Breast epithelium (tissue), 4 donors: ENCODE measurements at regions of chr2 and their contacts with region 1.

Region 1: DNA sequence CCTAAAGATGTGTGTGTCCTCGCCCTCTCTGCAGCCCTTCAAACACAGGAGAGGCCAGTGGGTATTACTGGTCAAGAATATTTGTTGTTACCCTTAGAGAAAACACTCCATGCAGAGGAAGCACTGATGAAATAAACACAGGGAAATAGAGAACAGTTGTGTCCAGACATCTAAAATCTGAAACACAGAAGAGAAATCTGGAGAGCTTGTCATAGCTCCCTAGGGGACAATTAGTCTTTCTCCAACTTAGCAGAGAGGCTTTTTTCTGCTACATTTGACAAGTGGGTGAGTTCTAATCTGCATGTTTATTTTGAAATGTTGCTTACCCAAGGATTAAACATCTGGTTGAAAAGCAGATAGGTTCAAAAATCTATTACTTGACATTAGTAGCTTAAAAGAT is 190.1 kb downstream of the CTNNA2 start:
- DNase-seq: no peak
- H3K4me3 ChIP-seq: no peak overlapping the region
- H3K27ac ChIP-seq: no peak overlapping the region
- H3K4me1 ChIP-seq: no peaks in the 10 kb centered on the region
- H3K27me3 ChIP-seq: no peaks in the 10 kb centered on the region
- CTCF ChIP-seq: no peak
- POLR2A ChIP-seq: no peak

Region 2: DNA sequence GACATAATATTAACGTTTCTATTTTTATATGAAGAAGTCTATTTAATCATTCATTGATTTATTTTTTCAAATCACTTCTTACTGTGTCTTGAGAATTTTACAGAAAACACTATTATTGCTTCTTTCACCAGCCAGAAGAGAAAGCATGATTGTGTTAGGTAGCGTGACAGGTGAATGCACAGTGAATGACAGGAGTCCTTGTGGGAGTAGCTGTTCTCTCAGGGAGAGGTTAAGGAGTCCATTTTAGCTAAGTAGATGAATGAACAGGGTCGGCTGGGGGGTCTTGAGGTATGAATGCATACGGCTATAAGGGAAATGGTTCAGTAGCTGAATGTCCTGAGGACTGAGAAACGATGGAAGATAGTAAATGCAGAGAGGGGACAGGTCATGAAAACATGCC is 133.9 kb before region 1 on chr2:
- intact Hi-C with region 1: loop called (anchors 10 kb)
- DNase-seq: no peak
- H3K4me3 ChIP-seq: no peak overlapping the region
- H3K27ac ChIP-seq: no peak overlapping the region
- H3K4me1 ChIP-seq: no peaks in the 10 kb centered on the region
- H3K27me3 ChIP-seq: no peaks in the 10 kb centered on the region
- CTCF ChIP-seq: no peak
- POLR2A ChIP-seq: no peak

Region 3: DNA sequence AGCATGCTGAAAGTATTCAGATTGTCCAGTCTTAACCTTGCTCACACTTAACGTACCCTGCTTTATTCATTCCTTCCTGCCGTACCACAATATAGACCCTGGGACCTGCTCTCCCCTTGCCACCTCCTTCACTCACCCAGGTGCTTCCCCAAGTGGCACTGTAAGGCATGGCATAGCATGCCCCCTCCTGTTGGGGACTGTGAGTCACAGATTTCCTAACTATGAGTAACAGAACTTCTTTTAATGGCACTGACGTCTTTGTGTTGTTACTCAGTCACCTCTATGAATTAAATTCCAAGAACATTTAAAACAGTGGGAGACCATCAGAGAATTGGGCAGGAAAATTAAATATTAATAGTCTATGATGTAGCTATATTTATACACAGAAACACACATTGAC is 72.8 kb before region 1 on chr2:
- intact Hi-C with region 1: no loop called
- DNase-seq: no peak
- H3K4me3 ChIP-seq: no peak overlapping the region
- H3K27ac ChIP-seq: no peak overlapping the region
- H3K4me1 ChIP-seq: no peaks in the 10 kb centered on the region
- H3K27me3 ChIP-seq: no peaks in the 10 kb centered on the region
- CTCF ChIP-seq: no peak
- POLR2A ChIP-seq: no peak